PC-9 (cell line): ENCODE measurements at regions of chr13 and their contacts with region 1.

Region 1: DNA sequence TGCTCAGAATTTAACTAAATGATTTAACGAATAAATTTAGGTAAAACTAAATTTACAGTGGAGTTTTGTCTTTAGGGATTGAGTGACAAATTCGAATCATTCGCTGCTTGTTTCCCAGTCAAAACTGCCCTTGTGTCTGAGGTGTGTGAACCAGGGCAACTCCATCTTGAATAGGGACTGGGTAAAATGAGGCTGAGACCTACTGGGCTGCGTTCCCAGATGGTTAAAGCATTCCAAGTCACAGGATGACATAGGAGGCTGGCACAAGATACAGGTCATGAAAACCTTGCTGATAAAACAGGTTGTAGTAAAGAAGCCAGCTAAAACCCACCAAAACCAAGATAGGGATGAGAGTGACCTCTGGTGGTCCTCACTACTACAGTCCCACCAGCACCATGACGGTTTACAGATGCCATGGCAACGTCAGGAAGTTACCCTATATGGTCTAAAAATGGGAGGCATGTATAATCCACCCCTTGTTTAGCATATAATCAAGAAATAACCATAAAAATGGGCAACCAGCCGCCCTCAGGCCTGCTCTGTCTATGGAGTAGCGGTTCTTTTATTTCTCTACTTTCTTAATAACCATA is 10.2 kb upstream of the ANKRD10 start:
- DNase-seq: no peak
- H3K4me3 ChIP-seq: no peak overlapping the region
- H3K27ac ChIP-seq: no peak overlapping the region
- H3K4me1 ChIP-seq: no peaks in the 10 kb centered on the region
- H3K27me3 ChIP-seq: peaks cover 32% of the 10 kb centered on the region; the same call in 1 of the 2 replicates
- CTCF ChIP-seq: no peak

Region 2: GRCh38 chr13:110294146-110294545 is 631.0 kb before region 1 on chr13:
- CTCF ChIA-PET with region 1: no interaction called
- POLR2A ChIA-PET with region 1: no interaction called
- intact Hi-C with region 1: no loop called
- DNase-seq: no peak
- H3K4me3 ChIP-seq: no peak overlapping the region
- H3K27ac ChIP-seq: no peak overlapping the region
- H3K4me1 ChIP-seq: no peaks in the 10 kb centered on the region
- H3K27me3 ChIP-seq: no peaks in the 10 kb centered on the region
- CTCF ChIP-seq: no peak

Region 3: GRCh38 chr13:110957181-110957884 is 32.2 kb after region 1 on chr13:
- CTCF ChIA-PET with region 1: interaction called, 10 read pairs
- POLR2A ChIA-PET with region 1: no interaction called
- intact Hi-C with region 1: no loop called
- DNase-seq: peak in 1 of 2 experiments; percentile 77
- H3K4me3 ChIP-seq: no peak overlapping the region
- H3K27ac ChIP-seq: peak overlapping the region; percentile 70
- H3K4me1 ChIP-seq: peaks cover 17% of the 10 kb centered on the region
- H3K27me3 ChIP-seq: no peaks in the 10 kb centered on the region
- CTCF ChIP-seq: peak; percentile 39; the same call in 1 of the 2 replicates

Region 4: GRCh38 chr13:111281751-111282311 is 356.7 kb after region 1 on chr13:
- CTCF ChIA-PET with region 1: no interaction called
- POLR2A ChIA-PET with region 1: no interaction called
- intact Hi-C with region 1: no loop called
- DNase-seq: no peak
- H3K4me3 ChIP-seq: no peak overlapping the region
- H3K27ac ChIP-seq: no peak overlapping the region
- H3K4me1 ChIP-seq: no peaks in the 10 kb centered on the region
- H3K27me3 ChIP-seq: no peaks in the 10 kb centered on the region
- CTCF ChIP-seq: no peak